CD4-positive, alpha-beta T cell (primary cell): ENCODE measurements at regions of chr9 and their contacts with region 1.

Region 1: DNA sequence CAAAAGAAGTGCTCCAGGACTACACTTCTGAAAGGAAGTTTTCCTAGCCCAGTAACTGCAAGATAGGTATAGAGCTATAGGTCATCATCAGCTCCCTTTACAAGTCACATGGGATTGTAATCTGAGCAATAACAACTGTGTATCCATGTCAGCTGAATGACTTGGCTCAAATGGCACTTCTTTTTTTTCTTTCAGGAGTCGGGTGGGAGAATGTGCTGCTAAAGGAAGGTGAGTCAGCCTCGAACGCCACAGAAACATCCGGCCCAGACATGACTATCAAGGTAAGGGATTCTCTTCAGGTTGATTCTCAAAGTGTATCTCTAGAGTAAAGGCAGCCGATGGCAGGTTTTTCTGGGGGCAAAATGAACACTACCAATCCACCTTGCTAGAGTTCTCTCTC is 192.2 kb downstream of the C9orf152 start:
- DNase-seq: peak in 7 of 14 experiments; percentile 3 to 35 (median 9)
- ATAC-seq: peak; percentile 44
- H3K4me3 ChIP-seq: no peak overlapping the region
- H3K4me3 Mint-ChIP-seq: no peak overlapping the region
- H3K27ac ChIP-seq: no peak overlapping the region
- H3K27ac Mint-ChIP-seq: no peak overlapping the region
- H3K4me1 ChIP-seq: peaks cover 7% of the 10 kb centered on the region
- H3K4me1 Mint-ChIP-seq: no peaks in the 10 kb centered on the region
- H3K27me3 ChIP-seq: no peaks in the 10 kb centered on the region
- H3K27me3 Mint-ChIP-seq: no peaks in the 10 kb centered on the region
- CTCF ChIP-seq: no peak

Region 2: DNA sequence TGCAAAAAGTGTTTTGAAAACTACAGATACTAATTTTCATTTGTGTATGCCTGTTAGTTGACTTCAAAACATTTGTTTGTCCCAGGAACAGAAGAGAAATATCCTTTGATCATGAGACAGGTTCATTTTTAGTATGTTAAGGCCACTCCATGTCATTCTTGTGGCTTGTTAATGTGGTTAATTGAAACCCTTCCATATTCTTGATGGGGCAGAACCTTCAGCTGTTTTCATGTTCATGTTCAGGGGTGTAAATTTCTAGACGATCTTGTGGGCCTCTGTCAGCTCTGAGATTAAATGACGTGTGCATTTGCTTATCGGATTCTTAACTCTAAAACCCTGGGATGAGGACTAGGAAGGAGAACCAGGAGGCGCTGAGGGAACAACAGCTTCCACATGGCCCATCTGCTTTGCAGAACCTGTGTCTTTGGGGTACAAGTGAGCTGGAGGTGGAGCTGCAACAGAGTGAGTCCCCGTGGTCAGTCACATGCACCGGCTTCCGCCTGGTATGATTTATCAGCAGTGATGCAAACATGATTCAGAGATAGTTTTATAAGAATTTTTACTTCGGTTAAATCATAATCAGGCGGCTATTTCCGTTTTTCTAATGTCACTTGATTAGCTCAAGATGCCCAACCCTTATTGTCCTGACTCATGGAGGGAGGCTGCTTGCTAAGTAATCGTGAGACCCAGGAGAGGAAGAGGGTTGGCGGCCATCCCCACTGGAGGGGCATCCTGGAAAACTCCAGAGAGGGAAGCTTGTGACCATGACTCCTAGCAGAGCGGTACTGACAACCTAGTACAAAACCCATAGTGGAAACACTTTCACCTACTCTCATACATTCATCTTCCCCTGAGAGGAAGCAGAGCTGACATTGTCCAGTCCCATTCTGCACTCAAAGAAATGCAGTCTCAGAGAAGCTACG is 53.8 kb after region 1 on chr9:
- CTCF ChIA-PET with region 1: no interaction called
- POLR2A ChIA-PET with region 1: no interaction called
- intact Hi-C with region 1: loop called in 1 of 2 experiments (anchors 10 kb)
- DNase-seq: peak in 2 of 14 experiments; percentile 50 to 66
- ATAC-seq: no peak
- H3K4me3 ChIP-seq: no peak overlapping the region
- H3K4me3 Mint-ChIP-seq: no peak overlapping the region
- H3K27ac ChIP-seq: no peak overlapping the region
- H3K27ac Mint-ChIP-seq: no peak overlapping the region
- H3K4me1 ChIP-seq: no peaks in the 10 kb centered on the region
- H3K4me1 Mint-ChIP-seq: peaks cover 14% of the 10 kb centered on the region
- H3K27me3 ChIP-seq: no peaks in the 10 kb centered on the region
- H3K27me3 Mint-ChIP-seq: no peaks in the 10 kb centered on the region
- CTCF ChIP-seq: no peak